Ascending aorta (tissue), 2 donors: ENCODE measurements at regions of chr9 and their contacts with region 1.

Region 1: DNA sequence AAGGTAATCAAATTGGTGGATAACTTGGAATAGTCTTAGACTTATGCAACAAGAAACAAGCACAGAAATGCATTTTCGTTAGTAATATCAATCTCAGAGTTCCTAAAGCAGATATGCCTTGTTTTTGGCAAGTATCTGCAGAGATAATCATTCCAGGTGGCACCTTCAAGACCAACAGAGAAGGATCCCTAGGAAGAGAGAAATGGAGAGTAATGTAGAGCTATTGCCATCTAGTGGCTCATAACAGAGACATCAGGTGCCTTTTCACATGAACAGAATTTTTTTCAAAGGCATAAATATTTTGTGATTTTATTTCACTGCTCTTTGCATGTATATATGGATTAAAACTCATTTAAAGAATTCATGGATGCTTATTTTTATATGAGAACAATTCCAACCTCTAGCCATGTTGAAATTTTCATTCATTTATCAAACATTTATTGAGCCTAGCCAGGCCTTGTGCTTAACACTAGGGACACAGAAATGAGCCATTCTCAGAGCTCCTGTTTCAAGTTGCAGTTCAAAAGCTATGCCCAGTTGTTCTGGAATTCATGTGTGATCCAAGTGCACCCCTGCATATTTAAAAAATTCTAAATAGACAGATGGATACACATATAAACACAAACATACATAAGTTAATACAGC is 117.5 kb upstream of the OR13F1 start:
- DNase-seq: no peak
- H3K4me3 ChIP-seq: no peak overlapping the region
- H3K27ac ChIP-seq: no peak overlapping the region
- H3K4me1 ChIP-seq: peaks cover 0 to 4% of the 10 kb centered on the region in 2 donors
- H3K27me3 ChIP-seq: no peaks in the 10 kb centered on the region
- CTCF ChIP-seq: peak; percentile 20 to 75 (median 72)

Region 2: GRCh38 chr9:104027295-104027694 is 359.3 kb before region 1 on chr9:
- intact Hi-C with region 1: loop called (anchors 5 kb)
- DNase-seq: no peak
- H3K4me3 ChIP-seq: no peak overlapping the region
- H3K27ac ChIP-seq: no peak overlapping the region
- H3K4me1 ChIP-seq: no peaks in the 10 kb centered on the region
- H3K27me3 ChIP-seq: no peaks in the 10 kb centered on the region
- CTCF ChIP-seq: no peak

Region 3: DNA sequence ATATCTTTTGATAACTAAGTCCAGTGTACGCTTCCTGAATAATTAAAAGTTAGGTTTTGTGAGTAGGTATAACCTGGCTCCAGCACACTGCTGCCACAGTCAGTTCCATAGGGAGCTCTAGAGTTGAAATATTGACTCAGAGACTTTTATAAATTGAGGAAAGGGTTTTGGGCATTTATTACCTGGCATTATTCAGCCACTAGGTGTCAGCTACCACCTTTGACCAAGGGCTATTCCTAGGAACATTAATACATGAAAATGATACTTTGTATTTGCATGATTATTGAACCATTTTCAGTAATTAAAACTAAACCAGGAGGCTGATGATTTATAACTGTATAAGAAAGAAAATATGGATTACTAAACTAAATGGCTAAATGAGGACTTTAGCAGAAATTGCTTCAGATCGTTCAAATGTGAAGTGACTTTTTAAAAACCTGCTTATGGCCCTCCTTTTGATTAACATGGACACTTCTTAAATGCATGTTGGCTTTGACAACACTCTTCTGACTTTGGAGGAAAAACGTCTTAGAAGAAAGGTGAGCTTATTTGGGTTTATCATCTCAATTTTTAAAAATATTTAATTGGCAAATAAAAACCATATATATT is 209.4 kb before region 1 on chr9:
- intact Hi-C with region 1: loop called (anchors 2 kb)
- DNase-seq: no peak
- H3K4me3 ChIP-seq: no peak overlapping the region
- H3K27ac ChIP-seq: no peak overlapping the region
- H3K4me1 ChIP-seq: no peaks in the 10 kb centered on the region
- H3K27me3 ChIP-seq: no peaks in the 10 kb centered on the region
- CTCF ChIP-seq: peak in 2 of 3 experiments; percentile 29 to 58

Region 4: GRCh38 chr9:104429031-104429546 is 42.5 kb after region 1 on chr9:
- intact Hi-C with region 1: no loop called
- DNase-seq: no peak
- H3K4me3 ChIP-seq: no peak overlapping the region
- H3K27ac ChIP-seq: no peak overlapping the region
- H3K4me1 ChIP-seq: no peaks in the 10 kb centered on the region
- H3K27me3 ChIP-seq: no peaks in the 10 kb centered on the region
- CTCF ChIP-seq: no peak